ENCODE measurements at regions of chr6 and their contacts with region 1.

Region 1: DNA sequence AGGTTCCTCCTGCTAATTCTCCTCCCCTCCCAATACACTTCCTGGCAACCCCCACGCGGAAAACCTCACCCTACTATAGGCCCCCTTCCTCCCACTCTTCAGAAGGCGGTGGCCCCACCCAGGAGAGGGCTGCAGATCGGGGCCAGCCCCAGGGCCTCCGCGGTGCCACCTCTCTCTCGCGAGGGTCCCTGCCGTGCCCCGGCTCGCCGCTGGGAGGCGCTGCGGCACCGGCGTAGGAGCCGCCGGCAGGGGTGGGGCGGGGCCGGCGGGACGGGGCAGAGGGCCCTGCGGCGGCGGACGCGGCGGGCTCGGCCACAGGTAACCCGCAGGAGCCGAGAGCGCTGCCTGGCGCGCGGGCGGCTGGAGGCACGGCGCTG is at the start of gene ANKRD6:
- DNase-seq: peak; percentile 77 to 86 (median 86)
- ATAC-seq: peak; percentile 99
- H3K4me3 ChIP-seq: peak within 1 kb of the TSS; percentile 38
- H3K4me1 ChIP-seq: peaks cover 7% of the 10 kb centered on the region
- CTCF ChIP-seq: peak; percentile 89
- total RNA-seq, gene ANKRD6: 1.8 to 10.9 (median 2.8) TPM

Region 2: GRCh38 chr6:89145787-89146646 is 286.8 kb before region 1 on chr6 and contains the start of gene PM20D2:
- intact Hi-C with region 1: no loop called
- DNase-seq: peak; percentile 76 to 83 (median 81)
- ATAC-seq: peak; percentile 91
- H3K4me3 ChIP-seq: peak within 1 kb of the TSS; percentile 38
- H3K4me1 ChIP-seq: peaks cover 6% of the 10 kb centered on the region
- CTCF ChIP-seq: no peak
- total RNA-seq, gene PM20D2: 9.4 to 17.6 (median 13.8) TPM

Region 3: DNA sequence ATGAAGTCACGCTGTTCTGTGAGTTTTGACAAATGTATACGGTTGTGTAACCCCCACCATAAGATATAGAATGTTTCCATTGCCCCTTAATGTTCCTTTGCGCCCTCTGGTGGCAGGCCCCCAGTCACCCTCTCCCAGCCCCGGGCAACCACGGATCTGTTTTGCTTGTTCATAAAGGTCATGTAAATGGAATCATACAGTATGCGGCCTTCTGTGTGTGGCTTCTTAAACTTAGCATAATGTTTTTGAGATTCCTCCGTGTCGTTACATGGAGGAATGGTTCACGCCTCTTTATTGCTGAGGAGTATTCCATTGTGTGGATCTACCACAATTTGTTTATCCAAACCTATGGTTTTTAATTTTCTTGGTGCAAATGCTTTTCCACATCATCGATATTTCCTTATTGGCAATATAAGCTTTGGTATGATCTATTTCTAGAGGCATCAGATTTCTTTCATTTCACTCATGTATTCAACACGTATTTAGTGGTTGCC is 177.3 kb after region 1 on chr6:
- intact Hi-C with region 1: loop called in 1 of 2 experiments (anchors 5 kb)
- DNase-seq: peak in 2 of 3 donors; percentile 74 to 85
- ATAC-seq: peak; percentile 74
- H3K4me3 ChIP-seq: no peak overlapping the region
- H3K4me1 ChIP-seq: no peaks in the 10 kb centered on the region
- CTCF ChIP-seq: peak; percentile 80

Region 4: DNA sequence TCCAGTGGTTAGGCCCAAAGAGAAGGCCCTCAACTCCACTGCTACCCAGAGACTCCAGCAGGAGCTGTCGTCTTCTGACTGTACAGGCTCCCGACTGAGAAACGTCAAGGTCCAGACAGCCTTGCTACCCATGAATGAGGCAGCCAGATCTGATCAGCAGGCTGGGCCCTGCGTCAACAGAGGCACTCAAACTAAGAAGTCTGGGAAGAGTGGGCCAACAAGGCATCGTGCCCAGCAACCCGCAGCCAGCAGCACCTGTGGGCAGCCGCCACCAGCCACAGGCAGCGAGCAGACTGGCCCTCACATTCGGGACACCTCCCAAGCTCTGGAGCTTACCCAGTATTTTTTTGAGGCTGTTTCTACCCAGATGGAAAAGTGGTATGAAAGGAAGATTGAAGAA is 197.6 kb after region 1 on chr6:
- intact Hi-C with region 1: no loop called
- DNase-seq: peak in 1 of 3 donors; percentile 46
- ATAC-seq: no peak
- H3K4me3 ChIP-seq: no peak overlapping the region
- H3K4me1 ChIP-seq: peaks cover 6% of the 10 kb centered on the region
- CTCF ChIP-seq: no peak

Measured in mucosa of descending colon (tissue), 3 donors.